Esophagus muscularis mucosa (tissue), 4 donors: ENCODE measurements at regions of chr15 and their contacts with region 1.

Region 1: GRCh38 chr15:37125143-37125542 is 24.8 kb upstream of the MEIS2 start:
- DNase-seq: no peak
- H3K4me3 ChIP-seq: no peak overlapping the region
- H3K27ac ChIP-seq: peak overlapping the region; percentile 35 to 64 (median 36)
- H3K4me1 ChIP-seq: peaks cover 0 to 40% (median 37%) of the 10 kb centered on the region in 4 donors
- H3K27me3 ChIP-seq: no peaks in the 10 kb centered on the region
- CTCF ChIP-seq: no peak
- EP300 ChIP-seq: no peak
- POLR2A ChIP-seq: no peak

Region 2: DNA sequence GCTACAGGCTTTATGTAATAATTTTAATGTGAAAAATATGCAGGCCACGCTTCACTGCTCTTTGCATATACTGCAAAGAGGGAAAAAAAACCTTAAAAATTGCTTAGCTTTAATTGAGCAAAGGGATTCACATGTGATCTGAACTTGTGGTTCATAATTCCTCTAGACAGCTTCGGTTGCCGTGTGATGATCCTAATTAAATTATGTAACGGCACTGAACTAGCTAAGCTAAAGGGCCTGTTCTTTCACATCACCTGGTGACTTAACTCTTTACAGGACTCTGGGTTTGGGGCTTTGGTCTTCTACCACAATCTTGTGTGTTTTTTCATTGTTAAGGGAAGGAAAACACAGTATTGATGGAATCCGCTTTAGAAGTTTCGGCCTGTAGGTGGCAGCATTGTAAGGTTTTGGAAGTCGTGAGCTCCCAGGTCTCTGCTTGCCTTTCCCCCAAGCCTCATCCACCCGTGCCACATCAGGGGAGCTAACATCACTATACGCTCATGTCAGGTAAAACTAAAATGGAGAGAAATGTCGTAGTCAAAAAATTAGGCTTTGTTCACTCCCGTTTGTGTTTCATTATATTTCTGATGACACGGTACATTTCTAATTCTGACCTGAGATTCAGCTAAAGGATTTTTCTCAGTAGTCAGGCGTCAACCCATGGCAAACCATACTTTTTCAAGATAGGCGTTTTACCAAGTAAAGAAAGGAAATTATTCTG is 1373.6 kb before region 1 on chr15:
- intact Hi-C with region 1: loop called (anchors 10 kb)
- DNase-seq: no peak
- H3K4me3 ChIP-seq: no peak overlapping the region
- H3K27ac ChIP-seq: peak overlapping the region in 1 of 4 donors; percentile 39
- H3K4me1 ChIP-seq: peaks cover 0 to 46% (median 36%) of the 10 kb centered on the region in 4 donors
- H3K27me3 ChIP-seq: no peaks in the 10 kb centered on the region
- CTCF ChIP-seq: peak; percentile 59 to 77 (median 75)
- EP300 ChIP-seq: no peak
- POLR2A ChIP-seq: no peak

Region 3: DNA sequence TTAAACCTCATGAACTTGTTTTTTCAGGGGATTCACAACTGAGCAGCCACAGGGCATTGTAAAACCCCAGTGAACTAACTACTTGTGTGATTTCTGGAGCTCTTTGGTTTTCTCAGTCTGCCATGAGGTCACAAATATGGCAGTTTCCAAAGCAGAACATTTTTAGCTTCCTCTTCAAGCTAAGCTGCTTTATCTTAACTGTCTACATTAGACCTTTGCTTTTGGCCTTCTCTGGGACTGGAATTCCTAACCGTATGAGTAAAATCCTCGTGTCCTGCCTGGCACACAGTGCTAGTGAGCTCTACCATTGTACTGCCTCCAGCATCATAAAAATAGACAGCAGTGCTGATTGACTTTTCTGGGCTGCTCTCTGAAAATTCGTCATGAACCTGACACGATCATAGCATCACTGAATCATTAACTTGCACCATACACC is 523.6 kb before region 1 on chr15:
- intact Hi-C with region 1: loop called (anchors 10 kb)
- DNase-seq: no peak
- H3K4me3 ChIP-seq: peak overlapping the region in 3 of 4 donors; percentile 19 to 33 (median 29)
- H3K27ac ChIP-seq: peak overlapping the region; percentile 81 to 86 (median 84)
- H3K4me1 ChIP-seq: peaks cover 32 to 91% (median 77%) of the 10 kb centered on the region in 4 donors
- H3K27me3 ChIP-seq: no peaks in the 10 kb centered on the region
- CTCF ChIP-seq: no peak
- EP300 ChIP-seq: no peak
- POLR2A ChIP-seq: no peak